Testis (tissue), 5 donors: ENCODE measurements at regions of chr6 and their contacts with region 1.

Region 1: GRCh38 chr6:83192871-83193746 is at the starts of genes PGM3 and RWDD2A:
- DNase-seq: peak; percentile 95
- H3K4me3 ChIP-seq: peak within 1 kb of the TSS; percentile 84 to 97
- H3K27ac ChIP-seq: peak within 1 kb of the TSS; percentile 89 to 95
- H3K4me1 ChIP-seq: peaks cover 13% of the 10 kb centered on the region
- H3K27me3 ChIP-seq: no peaks in the 10 kb centered on the region
- CTCF ChIP-seq: peak in 1 of 3 experiments; percentile 9
- POLR2A ChIP-seq: peak; percentile 78
- total RNA-seq, gene PGM3: 27.9 to 36.3 TPM
- total RNA-seq, gene RWDD2A: 11.0 to 13.2 TPM

Region 2: DNA sequence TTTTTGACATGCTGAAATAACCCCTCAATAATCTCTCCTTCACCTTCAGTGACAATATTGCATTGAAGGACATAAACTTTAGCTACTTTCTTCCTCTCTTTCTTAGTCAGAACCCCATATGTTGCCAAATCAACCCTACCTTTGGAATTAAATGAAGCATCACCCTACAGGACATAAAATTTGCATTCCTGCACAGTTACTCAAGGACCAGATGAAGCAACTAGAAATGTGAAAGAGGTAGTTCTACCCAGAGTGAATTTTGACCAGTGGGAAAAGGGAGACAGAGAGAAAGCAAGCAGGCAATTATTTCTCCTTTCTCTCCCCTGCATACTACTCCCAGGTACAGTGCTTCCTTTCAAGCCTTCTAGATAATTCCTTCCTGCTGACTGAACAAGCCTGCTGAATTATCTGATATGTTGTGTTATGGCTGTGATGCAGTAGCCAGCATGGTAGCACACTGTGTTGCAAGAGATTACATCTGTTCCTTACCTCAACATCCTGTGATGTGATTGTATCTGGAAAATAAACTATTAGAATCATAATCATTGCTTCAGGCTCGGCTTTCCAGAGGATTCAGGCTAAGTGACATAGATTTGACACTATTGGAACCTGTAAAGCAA is 1457.2 kb before region 1 on chr6:
- intact Hi-C with region 1: no loop called
- DNase-seq: no peak
- H3K4me3 ChIP-seq: no peak overlapping the region
- H3K27ac ChIP-seq: no peak overlapping the region
- H3K4me1 ChIP-seq: no peaks in the 10 kb centered on the region
- H3K27me3 ChIP-seq: no peaks in the 10 kb centered on the region
- CTCF ChIP-seq: no peak
- POLR2A ChIP-seq: no peak

Region 3: DNA sequence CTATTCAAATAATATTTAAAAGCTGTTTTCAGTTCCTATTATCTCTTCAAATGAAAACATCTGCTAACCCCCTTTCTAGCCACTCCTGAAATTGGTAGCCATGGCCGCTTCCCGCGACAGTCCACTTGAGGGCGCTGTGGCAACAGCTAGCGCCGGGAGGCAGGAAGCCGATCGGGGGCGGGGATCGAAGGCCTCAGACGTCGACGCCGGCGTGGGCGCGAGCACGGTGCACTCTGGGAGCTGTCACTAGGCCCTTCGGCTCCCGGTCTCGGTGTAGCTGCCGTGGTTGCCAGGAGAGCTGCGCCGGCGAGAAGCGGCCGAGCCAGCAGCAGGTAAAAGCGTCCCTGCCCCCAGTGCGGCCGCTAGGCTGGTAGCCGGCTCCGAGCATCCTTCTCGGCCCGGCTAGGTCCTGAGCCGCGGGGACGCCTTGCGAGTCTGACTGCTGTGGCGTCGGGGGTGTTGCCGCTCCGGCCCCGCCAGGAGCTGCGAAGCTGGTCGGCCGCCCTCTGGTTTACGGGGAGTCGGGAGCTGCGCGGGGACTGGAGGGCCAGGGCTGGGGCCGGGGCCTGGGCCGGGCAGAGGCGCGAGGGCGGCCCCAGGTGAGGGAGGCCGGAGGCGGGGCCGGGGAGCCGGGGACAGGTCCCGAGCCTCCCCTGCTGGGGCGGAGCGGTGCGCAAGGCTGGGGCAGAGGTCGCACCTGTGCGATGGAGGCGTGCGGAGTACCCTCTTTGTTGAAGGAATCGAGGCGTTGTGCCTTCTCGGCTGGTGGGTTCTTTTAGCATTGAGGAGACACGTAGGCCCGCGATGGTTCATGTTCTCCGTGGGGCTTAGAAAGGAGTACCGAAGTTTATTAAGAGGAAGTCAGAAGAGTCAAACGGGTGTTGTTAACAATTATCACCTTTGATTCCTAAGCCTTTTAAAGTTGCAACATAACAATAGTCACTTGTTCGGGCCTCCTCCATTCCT is 125.4 kb before region 1 on chr6 and contains the start of gene DOP1A:
- intact Hi-C with region 1: loop called (anchors 10 kb)
- DNase-seq: peak; percentile 98
- H3K4me3 ChIP-seq: peak within 1 kb of the TSS; percentile 84 to 99
- H3K27ac ChIP-seq: peak within 1 kb of the TSS; percentile 90 to 92
- H3K4me1 ChIP-seq: peaks cover 9% of the 10 kb centered on the region
- H3K27me3 ChIP-seq: no peaks in the 10 kb centered on the region
- CTCF ChIP-seq: peak; percentile 96 to 98 (median 97)
- POLR2A ChIP-seq: no peak
- total RNA-seq, gene DOP1A: 68.7 to 72.7 TPM